A673 (cell line): ENCODE measurements at regions of chrX and their contacts with region 1.

Region 1: GRCh38 chrX:100895365-100896075 is 21.4 kb upstream of the NOX1 start:
- DNase-seq: peak; percentile 24
- H3K4me3 ChIP-seq: no peak overlapping the region
- H3K27ac ChIP-seq: no peak overlapping the region
- H3K4me1 ChIP-seq: no peaks in the 10 kb centered on the region
- H3K27me3 ChIP-seq: no peaks in the 10 kb centered on the region
- CTCF ChIP-seq: peak; percentile 49

Region 2: GRCh38 chrX:101206471-101206870 is 311.0 kb after region 1 on chrX:
- CTCF ChIA-PET with region 1: no interaction called
- POLR2A ChIA-PET with region 1: no interaction called
- intact Hi-C with region 1: loop called (anchors 5 kb)
- DNase-seq: peak; percentile 53
- H3K4me3 ChIP-seq: no peak overlapping the region
- H3K27ac ChIP-seq: no peak overlapping the region
- H3K4me1 ChIP-seq: no peaks in the 10 kb centered on the region
- H3K27me3 ChIP-seq: no peaks in the 10 kb centered on the region
- CTCF ChIP-seq: peak; percentile 43

Region 3: GRCh38 chrX:101287402-101287801 is 391.9 kb after region 1 on chrX:
- CTCF ChIA-PET with region 1: no interaction called
- POLR2A ChIA-PET with region 1: no interaction called
- intact Hi-C with region 1: loop called (anchors 5 kb)
- DNase-seq: peak; percentile 58
- H3K4me3 ChIP-seq: no peak overlapping the region
- H3K27ac ChIP-seq: no peak overlapping the region
- H3K4me1 ChIP-seq: no peaks in the 10 kb centered on the region
- H3K27me3 ChIP-seq: no peaks in the 10 kb centered on the region
- CTCF ChIP-seq: peak; percentile 68